ENCODE measurements at regions of chr7 and their contacts with region 1.

Region 1: GRCh38 chr7:103524042-103524907 is 78.3 kb upstream of the SLC26A5 start:
- DNase-seq: no peak
- H3K4me3 Mint-ChIP-seq: no peak overlapping the region
- H3K27ac Mint-ChIP-seq: no peak overlapping the region
- H3K4me1 Mint-ChIP-seq: no peaks in the 10 kb centered on the region
- H3K27me3 Mint-ChIP-seq: no peaks in the 10 kb centered on the region
- CTCF ChIP-seq: peak; percentile 21

Region 2: DNA sequence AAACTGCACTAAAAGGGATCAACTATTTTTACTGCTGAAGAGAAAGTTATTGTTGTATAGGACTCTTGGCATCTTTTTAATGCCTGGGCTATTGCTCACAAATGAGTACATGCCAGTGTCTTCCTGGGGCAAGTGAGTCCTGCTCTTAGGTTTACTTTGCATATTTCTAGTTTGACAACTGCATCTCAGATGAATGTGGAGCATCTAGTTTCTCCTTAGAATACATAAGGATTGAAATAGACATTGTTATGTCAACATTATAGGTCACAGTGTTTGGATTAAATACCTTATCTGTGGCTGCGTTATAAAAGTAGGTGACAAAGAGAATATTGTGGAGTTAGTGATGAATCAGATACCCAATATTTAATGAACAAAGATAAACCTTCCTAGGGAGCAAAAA is 132.3 kb before region 1 on chr7:
- CTCF ChIA-PET with region 1: no interaction called
- intact Hi-C with region 1: no loop called
- DNase-seq: no peak
- H3K4me3 Mint-ChIP-seq: no peak overlapping the region
- H3K27ac Mint-ChIP-seq: no peak overlapping the region
- H3K4me1 Mint-ChIP-seq: no peaks in the 10 kb centered on the region
- H3K27me3 Mint-ChIP-seq: no peaks in the 10 kb centered on the region
- CTCF ChIP-seq: no peak

Region 3: GRCh38 chr7:103447073-103447951 is 77.0 kb before region 1 on chr7:
- CTCF ChIA-PET with region 1: no interaction called
- intact Hi-C with region 1: loop called (anchors 5 kb)
- DNase-seq: peak; percentile 60
- H3K4me3 Mint-ChIP-seq: no peak overlapping the region
- H3K27ac Mint-ChIP-seq: no peak overlapping the region
- H3K4me1 Mint-ChIP-seq: no peaks in the 10 kb centered on the region
- H3K27me3 Mint-ChIP-seq: peaks cover 61% of the 10 kb centered on the region
- CTCF ChIP-seq: peak; percentile 46